ENCODE measurements at regions of chr1 and their contacts with region 1.

Region 1: DNA sequence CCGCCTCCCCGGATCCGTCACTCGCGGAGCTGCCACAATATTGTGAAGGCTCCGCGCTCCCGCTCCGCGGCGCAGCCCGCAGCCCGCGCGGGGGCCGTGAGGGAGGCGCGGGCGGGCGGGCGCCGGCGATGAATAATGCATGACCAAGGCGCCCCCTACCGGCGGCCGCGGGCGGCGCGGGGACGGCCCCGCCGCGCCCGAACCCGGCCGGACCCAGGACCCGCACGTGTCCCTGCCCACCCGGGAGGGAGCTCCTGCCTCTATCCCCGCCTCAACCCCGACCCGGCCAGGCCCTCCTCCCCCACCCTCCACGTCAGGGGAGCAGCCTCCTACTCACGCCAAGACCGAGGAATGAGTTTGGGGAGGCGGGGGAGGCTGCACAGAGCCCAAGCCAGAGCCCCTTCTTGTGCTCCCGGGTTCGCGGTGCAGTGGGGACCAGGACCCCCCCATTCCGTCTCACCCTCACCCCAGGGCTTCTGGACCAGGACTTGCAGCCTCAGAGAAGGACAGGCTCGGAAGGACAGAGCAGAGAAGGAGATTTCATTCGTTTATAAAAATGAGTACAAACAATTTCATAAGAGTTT is 70.8 kb upstream of the CASZ1 start:
- DNase-seq: no peak
- H3K4me3 ChIP-seq: no peak overlapping the region
- CTCF ChIP-seq: no peak
- POLR2A ChIP-seq: no peak

Region 2: DNA sequence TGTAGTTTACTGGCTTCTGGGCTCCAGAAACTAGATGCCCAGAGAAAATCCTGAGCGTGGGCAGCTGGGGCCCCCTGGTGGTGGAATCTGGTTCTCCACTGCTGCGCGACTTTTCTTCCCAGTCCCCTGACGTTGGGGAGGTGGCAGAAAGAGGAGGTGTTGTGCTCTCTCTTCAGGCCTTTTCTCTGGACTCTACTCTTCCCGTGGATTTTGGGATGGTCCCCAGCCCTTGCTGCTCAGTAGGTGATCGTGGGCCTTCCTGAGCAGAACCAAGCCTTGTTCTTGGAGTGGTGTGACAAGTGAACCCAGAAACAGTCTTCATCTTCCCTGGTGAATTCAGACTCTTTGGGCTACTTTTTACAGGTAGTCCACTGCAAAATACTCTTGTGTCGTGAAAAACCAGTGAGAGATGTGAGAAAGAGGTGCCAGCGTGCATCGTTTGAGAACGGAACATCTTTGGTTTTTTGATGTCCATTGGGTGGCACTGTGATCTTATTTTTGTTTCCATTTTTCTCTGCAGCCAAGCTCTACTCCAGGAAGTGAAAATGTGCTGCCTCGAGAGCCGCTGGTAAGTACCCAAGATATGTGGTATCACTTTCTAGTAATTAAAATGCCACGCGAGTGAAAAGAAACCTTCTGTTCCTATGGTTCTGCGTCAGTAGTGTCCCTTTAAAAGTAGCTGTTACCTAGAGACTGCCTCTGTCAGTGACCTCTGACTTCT is 372.3 kb before region 1 on chr1:
- intact Hi-C with region 1: loop called (anchors 5 kb)
- DNase-seq: peak; percentile 65 to 96
- H3K4me3 ChIP-seq: no peak overlapping the region
- CTCF ChIP-seq: peak in 1 of 3 donors; percentile 46
- POLR2A ChIP-seq: no peak

Region 3: DNA sequence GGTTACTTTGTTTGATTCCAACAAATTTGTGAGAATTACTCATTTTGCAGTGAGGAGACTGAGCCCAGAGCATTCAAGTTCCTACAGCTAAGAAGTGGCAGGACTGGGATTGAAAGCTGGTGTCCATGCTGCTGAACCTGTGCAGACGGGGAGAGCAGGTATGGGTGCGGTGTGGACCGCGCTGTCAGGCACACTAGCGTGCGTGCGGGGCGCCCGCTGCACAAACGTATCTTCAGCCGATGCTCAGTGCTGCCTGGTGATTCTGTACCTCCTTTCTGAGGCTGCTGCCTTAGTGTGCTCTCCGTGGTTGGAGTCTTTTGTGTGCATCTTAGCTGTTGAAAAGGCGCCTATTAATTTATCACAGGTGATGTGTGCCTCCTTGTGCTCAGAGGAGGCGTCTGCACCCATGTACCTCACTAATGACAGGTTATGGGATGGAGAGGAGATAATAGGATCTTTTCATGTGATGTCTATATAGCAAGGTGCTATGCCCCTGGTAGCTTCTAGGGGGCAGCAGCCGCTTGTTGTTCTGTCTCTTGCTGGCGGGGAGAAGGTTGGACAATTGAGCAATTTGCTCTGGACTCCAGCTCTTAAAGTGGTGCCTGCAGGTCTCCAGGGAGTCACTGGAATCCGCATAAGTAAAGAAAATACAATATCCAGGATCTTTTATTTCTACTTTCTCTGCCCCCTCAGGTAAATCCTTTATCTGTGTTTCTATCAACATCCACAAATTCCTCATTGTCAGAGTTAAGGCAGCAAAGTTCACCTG is 359.9 kb before region 1 on chr1:
- intact Hi-C with region 1: loop called (anchors 5 kb)
- DNase-seq: no peak
- H3K4me3 ChIP-seq: no peak overlapping the region
- CTCF ChIP-seq: peak in 1 of 3 donors; percentile 10
- POLR2A ChIP-seq: no peak

Region 4: DNA sequence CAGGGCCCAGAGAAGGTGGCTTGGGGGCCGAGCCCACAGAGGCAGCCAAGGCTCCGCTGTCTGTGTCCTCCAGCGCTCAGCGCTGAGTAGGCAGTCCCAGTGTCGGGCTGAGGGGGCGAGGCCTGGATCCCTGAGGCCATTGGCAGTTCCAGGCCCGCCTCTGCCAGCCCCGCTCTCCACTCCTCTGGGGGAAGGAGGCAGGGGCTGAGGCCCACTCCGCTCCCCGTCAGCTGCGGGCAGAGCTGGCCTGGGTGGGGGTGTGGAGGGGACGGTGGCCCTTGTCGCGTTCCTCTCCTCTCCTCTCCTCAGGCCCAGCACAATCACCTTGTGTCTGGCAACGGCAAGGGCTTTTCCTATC is 203.6 kb before region 1 on chr1:
- intact Hi-C with region 1: loop called (anchors 10 kb)
- DNase-seq: no peak
- H3K4me3 ChIP-seq: no peak overlapping the region
- CTCF ChIP-seq: no peak
- POLR2A ChIP-seq: no peak

Region 5: DNA sequence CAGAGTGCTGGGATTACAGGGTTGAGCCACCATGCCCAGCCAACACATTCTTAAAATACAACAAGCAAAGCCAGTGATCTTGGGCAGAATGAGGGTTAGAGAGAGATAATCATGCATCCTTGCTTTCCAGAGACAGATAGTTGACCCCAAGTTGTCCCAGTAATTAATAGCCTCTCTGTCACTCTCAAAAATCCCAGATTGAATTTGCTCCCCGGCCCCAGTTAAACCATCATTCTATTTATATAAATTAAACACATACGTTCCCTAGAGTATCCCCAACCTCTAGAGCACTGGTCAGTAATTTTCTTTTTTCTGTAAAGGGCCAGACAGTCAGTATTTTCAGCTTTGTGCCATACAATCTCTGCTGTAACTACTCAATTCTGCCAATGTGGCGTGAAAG is 128.9 kb after region 1 on chr1:
- intact Hi-C with region 1: no loop called
- DNase-seq: no peak
- H3K4me3 ChIP-seq: no peak overlapping the region
- CTCF ChIP-seq: no peak
- POLR2A ChIP-seq: no peak